ENCODE measurements at regions of chr11 and their contacts with region 1.

Region 1: DNA sequence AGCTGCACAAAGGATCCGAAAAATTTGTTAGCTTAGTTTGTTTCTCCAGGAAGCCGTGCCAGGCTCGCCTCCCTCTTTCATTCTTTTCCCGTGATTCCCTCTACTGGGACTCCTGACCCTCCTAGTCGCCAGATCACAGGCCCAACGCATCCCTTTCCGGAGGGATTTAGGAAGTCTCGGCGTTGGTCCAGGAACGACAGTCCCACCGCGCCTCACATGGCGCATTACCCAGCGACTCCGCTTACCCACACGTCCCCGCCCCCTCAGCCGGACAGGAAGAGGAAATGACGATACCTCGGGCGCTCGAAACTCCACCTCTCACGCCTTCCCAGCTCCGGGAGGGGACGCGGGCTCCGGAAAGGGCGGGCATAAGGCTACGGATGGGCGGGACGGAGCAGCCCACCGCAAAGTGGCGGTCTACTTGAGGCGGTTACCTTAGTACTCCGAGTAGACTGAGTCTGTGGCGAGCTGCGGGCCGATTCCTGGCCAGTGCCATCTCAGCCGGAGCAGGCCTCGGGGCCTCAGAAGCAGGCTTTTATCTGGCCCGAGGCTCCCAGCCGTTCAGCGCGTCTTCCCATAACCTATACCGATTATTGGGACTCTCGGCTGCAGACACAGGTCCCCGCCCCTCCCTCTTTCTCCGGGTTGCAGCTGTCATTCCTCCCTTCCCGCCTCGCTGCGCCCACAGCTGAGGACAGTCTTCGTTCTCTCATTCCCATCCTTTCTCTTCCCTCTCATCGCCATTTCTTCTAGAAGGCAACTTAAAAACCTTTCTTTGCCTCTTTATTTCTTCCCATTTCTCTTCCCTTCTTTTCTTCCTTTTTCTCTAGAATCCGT is at the start of gene CCDC15:
- DNase-seq: peak; percentile 95
- H3K4me3 ChIP-seq: peak within 1 kb of the TSS; percentile 75
- H3K27ac ChIP-seq: peak within 1 kb of the TSS; percentile 71
- H3K27me3 ChIP-seq: no peaks in the 10 kb centered on the region
- CTCF ChIP-seq: no peak

Region 2: DNA sequence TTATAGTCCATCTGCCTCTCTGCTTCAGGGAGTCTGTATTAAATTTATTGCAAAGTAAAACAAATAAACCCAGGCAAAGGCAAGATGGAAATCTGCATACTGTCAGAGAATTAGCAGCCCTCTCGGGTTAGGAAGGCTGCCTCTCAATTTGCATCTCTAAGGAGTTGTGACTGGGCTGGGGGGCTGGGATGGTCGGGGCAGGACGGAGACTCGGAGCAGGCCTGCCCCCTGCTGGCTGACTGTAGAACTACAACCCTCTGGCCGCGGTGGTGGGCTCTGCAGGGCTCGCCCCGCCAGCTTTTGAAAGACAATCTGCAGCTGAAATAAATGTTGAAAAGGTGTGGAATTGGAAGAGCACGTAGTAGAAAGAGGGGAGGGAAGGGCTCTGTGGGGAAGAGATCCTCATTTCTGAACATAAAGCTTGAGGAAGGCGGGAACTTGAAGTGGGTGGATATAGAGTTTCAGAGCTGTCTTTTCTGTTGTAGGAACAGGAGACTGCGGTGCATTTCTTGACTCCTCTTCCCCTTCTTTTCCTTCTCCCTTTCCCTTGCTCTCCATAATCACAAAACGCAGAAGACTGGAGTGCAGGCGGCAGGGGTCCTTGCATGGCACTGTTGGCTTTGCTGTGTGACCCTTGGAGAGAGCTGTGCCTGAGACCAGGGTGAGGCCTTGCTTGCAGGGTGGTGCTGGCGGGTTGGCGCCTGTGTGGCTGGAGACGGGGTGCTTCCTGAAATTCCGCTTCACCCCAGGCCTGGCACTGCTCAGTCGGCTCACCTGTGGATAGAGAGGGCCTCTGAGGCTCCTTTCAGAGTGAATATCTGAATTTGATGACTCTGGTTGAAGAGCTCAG is 187.9 kb after region 1 on chr11:
- in situ Hi-C with region 1: loop called (anchors 25 kb)
- DNase-seq: peak; percentile 27
- H3K4me3 ChIP-seq: no peak overlapping the region
- H3K27ac ChIP-seq: no peak overlapping the region
- H3K27me3 ChIP-seq: no peaks in the 10 kb centered on the region
- CTCF ChIP-seq: peak; percentile 98

Region 3: GRCh38 chr11:125404776-125405435 is 450.9 kb after region 1 on chr11:
- in situ Hi-C with region 1: loop called (anchors 25 kb)
- DNase-seq: peak; percentile 37
- H3K4me3 ChIP-seq: no peak overlapping the region
- H3K27ac ChIP-seq: no peak overlapping the region
- H3K27me3 ChIP-seq: no peaks in the 10 kb centered on the region
- CTCF ChIP-seq: peak; percentile 97